ENCODE measurements at regions of chr7 and their contacts with region 1.

Region 1: GRCh38 chr7:78510580-78511188 is 712.1 kb downstream of the PHTF2 start:
- DNase-seq: peak; percentile 38 to 63
- H3K4me3 ChIP-seq: no peak overlapping the region
- H3K27ac ChIP-seq: no peak overlapping the region
- H3K4me1 ChIP-seq: no peaks in the 10 kb centered on the region
- H3K27me3 ChIP-seq: no peaks in the 10 kb centered on the region
- CTCF ChIP-seq: peak in 5 of 6 experiments; percentile 24 to 80 (median 65)
- POLR2A ChIP-seq: no peak

Region 2: GRCh38 chr7:78399033-78399769 is 111.5 kb before region 1 on chr7:
- intact Hi-C with region 1: no loop called
- DNase-seq: no peak
- H3K4me3 ChIP-seq: no peak overlapping the region
- H3K27ac ChIP-seq: no peak overlapping the region
- H3K4me1 ChIP-seq: peaks cover 0 to 5% of the 10 kb centered on the region in 2 donors
- H3K27me3 ChIP-seq: no peaks in the 10 kb centered on the region
- CTCF ChIP-seq: no peak
- POLR2A ChIP-seq: no peak

Region 3: DNA sequence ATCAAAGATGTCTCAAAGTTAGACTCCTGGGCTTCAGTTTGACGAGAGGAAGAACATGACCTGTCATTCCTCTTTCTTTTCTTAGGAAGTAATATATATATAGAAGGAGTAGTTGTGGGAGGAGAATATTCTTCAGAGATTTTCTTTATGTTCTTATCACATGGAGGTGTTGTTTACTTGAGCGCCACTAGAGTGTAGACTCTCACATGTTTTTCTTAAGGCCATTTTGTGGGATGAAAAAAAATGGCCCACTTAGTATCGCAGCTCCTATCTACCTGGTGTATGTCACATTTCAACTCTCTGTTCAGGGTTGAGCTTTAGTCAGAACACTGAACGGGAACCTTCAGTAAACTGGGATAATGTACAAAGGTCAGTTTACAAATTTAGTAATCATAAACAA is 66.9 kb before region 1 on chr7:
- intact Hi-C with region 1: no loop called
- DNase-seq: no peak
- H3K4me3 ChIP-seq: no peak overlapping the region
- H3K27ac ChIP-seq: no peak overlapping the region
- H3K4me1 ChIP-seq: no peaks in the 10 kb centered on the region
- H3K27me3 ChIP-seq: no peaks in the 10 kb centered on the region
- CTCF ChIP-seq: no peak
- POLR2A ChIP-seq: no peak

Region 4: DNA sequence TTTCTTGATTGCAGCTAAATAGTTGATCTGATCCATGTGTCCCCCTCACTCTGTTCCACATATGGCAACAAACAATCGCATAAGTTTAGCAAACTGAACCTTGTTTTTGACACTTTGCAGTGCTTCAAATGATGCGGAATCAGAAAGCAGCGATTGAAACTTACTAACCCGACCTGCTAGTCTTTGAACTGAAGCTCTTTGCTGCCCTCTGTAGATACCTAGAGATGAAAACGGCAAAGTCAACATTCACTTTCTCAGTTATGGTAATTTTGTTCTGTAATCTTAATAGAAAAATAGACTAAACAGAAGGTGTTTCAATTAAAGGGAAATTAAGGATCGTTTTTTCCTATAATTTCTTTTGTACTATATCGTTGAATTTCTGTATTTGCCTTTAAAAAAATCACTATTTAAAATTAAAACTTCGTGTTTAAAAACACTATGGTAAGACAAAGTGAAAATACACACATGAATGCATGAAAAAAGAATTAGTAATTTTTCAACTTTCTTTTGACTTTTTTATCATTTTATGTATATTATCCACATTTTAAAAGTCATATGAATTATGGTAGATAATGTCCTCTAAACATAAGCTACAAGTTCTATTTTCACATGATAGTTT is 666.3 kb after region 1 on chr7:
- intact Hi-C with region 1: loop called (anchors 10 kb)
- DNase-seq: no peak
- H3K4me3 ChIP-seq: no peak overlapping the region
- H3K27ac ChIP-seq: no peak overlapping the region
- H3K4me1 ChIP-seq: no peaks in the 10 kb centered on the region
- H3K27me3 ChIP-seq: no peaks in the 10 kb centered on the region
- CTCF ChIP-seq: peak; percentile 28 to 72 (median 48)
- POLR2A ChIP-seq: no peak